Heart left ventricle (tissue), 16 donors: ENCODE measurements at regions of chr13 and their contacts with region 1.

Region 1: DNA sequence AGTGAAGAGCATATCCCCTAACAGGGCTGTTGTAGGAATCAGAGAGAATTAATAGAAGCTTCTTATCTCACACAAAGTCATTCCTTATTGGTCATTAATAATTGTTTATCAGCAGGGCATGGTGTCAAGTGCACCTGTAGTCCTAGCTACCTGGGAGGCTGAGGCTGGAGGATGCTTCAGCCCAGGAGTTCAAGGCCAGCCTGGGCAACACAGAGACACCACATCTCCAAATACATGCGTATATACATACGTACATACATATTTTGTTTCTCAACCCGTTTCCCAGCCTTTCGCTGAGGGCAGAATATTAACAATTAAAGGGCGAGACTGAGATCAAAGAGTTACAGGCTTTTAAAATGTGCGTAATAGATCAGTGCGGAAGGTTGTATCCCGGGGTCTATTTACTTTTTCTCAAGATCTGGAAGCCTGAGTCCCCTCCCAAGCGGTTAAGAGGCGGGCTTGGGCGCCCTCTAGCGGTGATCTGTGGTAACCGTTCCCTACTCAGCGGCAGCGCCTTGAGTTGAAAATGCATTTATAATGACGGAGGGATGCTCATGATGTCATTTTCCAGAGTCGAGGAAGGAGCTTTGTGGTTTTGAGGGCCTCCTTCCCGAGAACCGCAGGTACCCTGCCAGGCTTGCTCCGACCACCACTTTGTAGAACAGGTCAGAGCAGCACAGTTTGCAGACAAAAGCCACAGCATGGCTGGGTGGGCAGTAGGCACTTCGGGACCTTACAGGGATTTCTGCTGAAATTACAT is 169.6 kb upstream of the GPR12 start:
- DNase-seq: peak; percentile 50 to 83 (median 57)
- ATAC-seq: peak in 3 of 4 donors; percentile 68 to 73 (median 68)
- H3K4me3 ChIP-seq: no peak overlapping the region
- H3K27ac ChIP-seq: no peak overlapping the region
- H3K4me1 ChIP-seq: peaks cover 0 to 5% (median 0%) of the 10 kb centered on the region in 12 donors
- H3K27me3 ChIP-seq: peaks cover 0 to 12% (median 0%) of the 10 kb centered on the region in 9 donors
- CTCF ChIP-seq: peak; percentile 85 to 97 (median 96)
- POLR2A ChIP-seq: no peak

Region 2: GRCh38 chr13:26482451-26483197 is 447.5 kb before region 1 on chr13:
- intact Hi-C with region 1: loop called in 1 of 10 experiments (anchors 10 kb)
- DNase-seq: peak in 2 of 5 donors; percentile 37 to 51
- ATAC-seq: peak in 1 of 4 donors; percentile 32
- H3K4me3 ChIP-seq: no peak overlapping the region
- H3K27ac ChIP-seq: no peak overlapping the region
- H3K4me1 ChIP-seq: peaks cover 0 to 22% (median 4%) of the 10 kb centered on the region in 12 donors
- H3K27me3 ChIP-seq: no peaks in the 10 kb centered on the region
- CTCF ChIP-seq: peak; percentile 70 to 92 (median 82)
- POLR2A ChIP-seq: no peak

Region 3: DNA sequence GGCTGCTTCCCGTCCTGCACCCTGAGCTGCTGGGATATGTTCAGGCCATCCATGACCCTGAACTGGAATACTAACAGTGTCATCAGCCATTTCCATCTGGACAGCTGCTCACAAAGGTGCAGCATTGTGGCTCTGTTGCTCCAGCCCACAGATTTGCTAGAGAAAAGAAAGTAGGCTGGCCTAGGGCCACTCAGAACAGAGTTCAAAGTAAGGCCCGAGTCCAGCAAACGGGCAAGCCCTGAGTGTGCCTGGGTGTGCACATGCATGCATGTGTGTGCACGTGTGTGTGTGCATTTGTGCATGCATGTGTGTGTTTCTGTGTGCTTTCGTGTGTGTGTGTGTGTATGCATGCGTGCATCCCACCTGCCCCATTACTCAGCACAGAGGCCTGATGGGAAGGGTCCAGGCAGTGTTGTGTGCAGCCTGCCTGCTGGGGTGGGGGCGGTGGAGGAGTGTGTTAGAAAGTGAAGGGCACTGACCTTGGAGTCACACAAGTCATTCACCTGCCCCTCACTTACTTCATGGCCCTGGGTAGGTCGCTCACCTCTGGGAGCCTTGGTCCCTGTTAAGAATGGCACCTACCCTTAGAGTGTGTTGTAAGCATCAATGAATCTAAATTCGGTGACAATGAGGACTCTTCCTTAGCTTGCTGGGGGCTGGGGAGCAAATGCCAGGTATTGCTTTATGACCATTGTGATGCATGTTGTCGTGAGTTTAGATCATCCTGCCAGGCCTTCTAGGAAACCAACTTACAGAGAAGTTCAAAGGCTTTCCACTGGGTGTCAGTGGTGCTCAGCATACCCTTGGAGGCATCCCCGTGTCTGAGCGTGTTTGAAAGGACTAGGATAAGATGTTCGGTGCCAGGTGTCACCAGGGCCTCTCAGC is 222.8 kb before region 1 on chr13:
- intact Hi-C with region 1: loop called (anchors 1 to 5 kb)
- DNase-seq: peak in 2 of 5 donors; percentile 33 to 42
- ATAC-seq: peak; percentile 75 to 85 (median 82)
- H3K4me3 ChIP-seq: no peak overlapping the region
- H3K27ac ChIP-seq: no peak overlapping the region
- H3K4me1 ChIP-seq: no peaks in the 10 kb centered on the region
- H3K27me3 ChIP-seq: peaks cover 0 to 16% (median 0%) of the 10 kb centered on the region in 9 donors
- CTCF ChIP-seq: peak; percentile 40 to 73 (median 64)
- POLR2A ChIP-seq: no peak

Region 4: DNA sequence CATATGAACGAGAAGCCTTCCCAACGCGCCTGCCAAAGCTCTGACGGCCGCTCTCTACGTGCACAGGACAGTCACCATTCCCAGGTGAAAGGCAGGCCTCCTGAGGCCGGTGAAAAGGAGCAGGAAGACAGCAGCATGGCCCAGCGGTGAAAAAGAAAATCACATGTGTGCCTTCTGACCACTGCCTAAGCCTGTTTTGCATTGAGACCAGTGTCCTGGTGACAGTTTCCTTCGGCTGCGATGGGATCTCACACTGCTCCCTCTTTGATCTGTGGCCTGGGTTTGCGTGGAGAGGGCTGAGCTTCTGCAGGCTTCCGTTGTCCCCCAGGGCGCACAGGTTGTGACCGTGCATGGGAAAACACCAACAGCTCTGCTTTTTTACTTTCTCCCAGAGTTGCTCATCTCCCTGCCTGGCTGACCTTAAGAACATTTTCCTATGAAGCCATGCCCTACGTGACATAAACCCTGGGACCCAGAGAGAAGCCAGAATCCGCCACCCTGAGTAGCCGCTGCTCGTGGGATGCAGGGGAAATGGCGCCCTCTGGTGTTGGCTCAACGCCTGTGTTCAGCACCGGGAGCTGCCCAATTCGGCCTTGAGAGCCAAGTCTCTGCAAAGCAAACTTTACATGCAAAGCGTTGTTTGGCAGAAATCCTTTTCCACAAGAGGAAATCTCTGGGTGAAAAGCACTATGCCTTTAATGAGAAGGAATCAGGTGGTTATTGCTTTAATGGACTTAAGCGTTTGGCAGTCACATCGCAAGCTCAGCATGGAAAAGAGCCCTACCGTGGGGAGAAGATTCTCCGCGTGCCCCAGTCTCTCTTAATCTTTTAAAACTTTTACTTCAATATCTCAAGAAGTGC is 57.4 kb before region 1 on chr13:
- intact Hi-C with region 1: loop called in 1 of 10 experiments (anchors 5 kb)
- DNase-seq: peak; percentile 27 to 77 (median 48)
- ATAC-seq: peak in 3 of 4 donors; percentile 43 to 72 (median 63)
- H3K4me3 ChIP-seq: no peak overlapping the region
- H3K27ac ChIP-seq: no peak overlapping the region
- H3K4me1 ChIP-seq: no peaks in the 10 kb centered on the region
- H3K27me3 ChIP-seq: peaks cover 0 to 26% (median 4%) of the 10 kb centered on the region in 9 donors
- CTCF ChIP-seq: peak; percentile 54 to 80 (median 62)
- POLR2A ChIP-seq: no peak